ENCODE measurements at regions of chr6 and their contacts with region 1.

Region 1: GRCh38 chr6:163971841-163972838 is 557.6 kb downstream of the QKI start:
- DNase-seq: no peak
- ATAC-seq: no peak
- H3K4me3 ChIP-seq: peak overlapping the region in 1 of 12 donors; percentile 11
- H3K27ac ChIP-seq: no peak overlapping the region
- H3K4me1 ChIP-seq: peaks cover 0 to 7% (median 0%) of the 10 kb centered on the region in 12 donors
- H3K27me3 ChIP-seq: no peaks in the 10 kb centered on the region
- CTCF ChIP-seq: no peak
- POLR2A ChIP-seq: no peak

Region 2: DNA sequence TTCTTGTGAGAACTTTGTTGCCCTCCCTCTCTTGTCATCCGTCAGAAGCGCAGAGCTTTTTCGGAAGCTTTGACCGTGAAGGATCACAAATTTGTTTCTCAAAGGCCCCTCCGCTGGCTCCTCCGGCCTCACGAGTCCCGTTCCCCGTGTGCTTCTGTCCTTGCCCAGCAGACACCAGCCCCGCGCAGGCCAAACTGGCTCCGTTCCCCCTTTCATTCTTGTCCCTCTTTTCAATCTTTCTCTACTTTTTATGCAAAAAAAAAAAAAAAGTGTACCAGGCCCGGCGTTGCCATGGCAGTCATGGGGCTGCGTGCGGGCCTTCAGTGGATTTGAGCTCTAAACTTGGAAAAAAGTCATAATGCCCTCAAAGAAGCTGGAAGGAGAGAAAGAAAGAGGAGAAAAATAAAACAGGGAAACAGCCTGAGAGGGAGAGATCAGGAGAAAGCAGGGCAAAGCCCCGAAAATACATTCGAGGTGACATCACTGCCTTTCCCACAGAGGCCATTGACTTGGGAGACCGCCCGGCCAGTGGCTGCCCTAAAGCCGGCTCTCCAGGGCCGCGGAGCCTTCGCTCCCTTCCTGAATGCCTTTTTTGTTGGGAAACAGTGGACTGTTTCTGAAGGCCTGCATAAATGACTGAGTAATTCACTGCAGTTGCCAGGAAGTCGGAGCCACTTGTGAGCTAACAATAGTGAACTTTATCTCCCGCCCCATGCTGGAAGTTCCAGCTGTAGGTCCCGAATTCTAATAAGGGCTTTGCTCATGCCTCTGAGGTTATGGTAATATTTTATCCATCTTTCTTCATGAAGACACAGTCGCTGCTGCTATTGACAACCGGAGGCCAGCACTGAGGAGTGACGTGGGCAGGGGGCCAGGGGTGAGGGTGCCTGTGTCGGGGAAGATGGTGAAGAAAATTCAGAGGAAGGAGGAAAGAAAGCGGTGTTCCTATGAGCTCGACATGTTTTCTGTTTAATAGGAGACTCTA is 113.2 kb after region 1 on chr6:
- intact Hi-C with region 1: loop called in 1 of 10 experiments (anchors 5 kb)
- DNase-seq: peak; percentile 84 to 91 (median 86)
- ATAC-seq: peak; percentile 75 to 96 (median 94)
- H3K4me3 ChIP-seq: peak overlapping the region in 8 of 12 donors; percentile 14 to 40 (median 31)
- H3K27ac ChIP-seq: peak overlapping the region; percentile 84 to 96 (median 88)
- H3K4me1 ChIP-seq: peaks cover 0 to 25% (median 17%) of the 10 kb centered on the region in 12 donors
- H3K27me3 ChIP-seq: no peaks in the 10 kb centered on the region
- CTCF ChIP-seq: no peak
- POLR2A ChIP-seq: no peak